ENCODE measurements at regions of chr3 and their contacts with region 1.

Region 1: DNA sequence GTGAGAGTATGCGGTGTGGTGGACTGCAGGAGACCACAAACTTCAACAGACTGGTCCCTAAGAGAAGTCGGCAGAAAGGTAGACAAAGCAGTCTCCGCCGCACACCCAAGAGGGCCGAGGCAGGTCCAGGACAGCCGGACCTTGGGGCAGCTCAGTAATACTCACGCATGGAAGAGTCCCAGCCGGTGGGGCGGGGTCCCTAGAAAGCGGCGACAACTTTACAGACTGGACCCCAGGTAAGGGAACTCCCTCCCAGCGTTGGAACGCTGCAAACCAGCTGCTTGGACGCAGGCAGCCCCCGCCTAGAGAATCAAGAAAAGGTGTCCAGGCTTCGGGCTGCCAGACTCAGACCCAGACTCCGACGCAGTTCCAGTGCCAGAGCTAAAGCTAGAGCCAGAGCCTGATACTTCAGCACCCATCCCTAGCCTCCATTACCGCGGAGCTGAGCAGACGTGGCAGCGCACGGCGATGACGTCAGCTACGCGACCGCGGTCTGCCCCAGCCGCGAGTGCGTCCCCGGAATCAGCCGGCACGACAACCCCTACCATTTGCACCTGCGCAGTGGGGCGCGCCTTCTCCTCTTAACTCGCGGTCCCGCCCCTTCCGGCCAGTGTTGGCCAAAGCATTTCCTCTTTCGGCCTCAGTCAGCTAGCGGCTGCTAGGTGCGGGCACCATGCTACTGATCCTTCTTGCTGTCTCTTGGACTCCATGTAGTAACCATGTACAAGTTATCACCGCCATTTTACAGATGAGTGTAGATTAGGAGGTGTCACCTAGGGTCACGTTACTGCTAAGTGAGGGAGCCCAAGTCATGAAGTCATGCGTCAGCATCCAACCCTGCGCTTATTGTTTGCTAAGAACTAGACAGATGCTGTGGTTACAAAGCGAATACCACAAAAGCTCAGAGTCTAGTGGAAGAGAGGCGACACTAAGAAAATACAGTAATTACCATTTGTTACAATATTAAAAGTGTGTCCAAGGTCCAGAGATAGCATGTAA is at the start of gene TMEM39A:
- DNase-seq: peak; percentile 98
- ATAC-seq: peak; percentile 97 to 98
- H3K4me3 ChIP-seq: peak within 1 kb of the TSS; percentile 88
- H3K27ac ChIP-seq: peak within 1 kb of the TSS; percentile 86 to 88
- H3K4me1 ChIP-seq: peaks cover 19% of the 10 kb centered on the region
- CTCF ChIP-seq: no peak
- EP300 ChIP-seq: no peak
- POLR2A ChIP-seq: peak; percentile 94
- RAD21 ChIP-seq: no peak
- polyA plus RNA-seq, gene TMEM39A: 21.9 and 38.9 TPM in 2 replicates

Region 2: DNA sequence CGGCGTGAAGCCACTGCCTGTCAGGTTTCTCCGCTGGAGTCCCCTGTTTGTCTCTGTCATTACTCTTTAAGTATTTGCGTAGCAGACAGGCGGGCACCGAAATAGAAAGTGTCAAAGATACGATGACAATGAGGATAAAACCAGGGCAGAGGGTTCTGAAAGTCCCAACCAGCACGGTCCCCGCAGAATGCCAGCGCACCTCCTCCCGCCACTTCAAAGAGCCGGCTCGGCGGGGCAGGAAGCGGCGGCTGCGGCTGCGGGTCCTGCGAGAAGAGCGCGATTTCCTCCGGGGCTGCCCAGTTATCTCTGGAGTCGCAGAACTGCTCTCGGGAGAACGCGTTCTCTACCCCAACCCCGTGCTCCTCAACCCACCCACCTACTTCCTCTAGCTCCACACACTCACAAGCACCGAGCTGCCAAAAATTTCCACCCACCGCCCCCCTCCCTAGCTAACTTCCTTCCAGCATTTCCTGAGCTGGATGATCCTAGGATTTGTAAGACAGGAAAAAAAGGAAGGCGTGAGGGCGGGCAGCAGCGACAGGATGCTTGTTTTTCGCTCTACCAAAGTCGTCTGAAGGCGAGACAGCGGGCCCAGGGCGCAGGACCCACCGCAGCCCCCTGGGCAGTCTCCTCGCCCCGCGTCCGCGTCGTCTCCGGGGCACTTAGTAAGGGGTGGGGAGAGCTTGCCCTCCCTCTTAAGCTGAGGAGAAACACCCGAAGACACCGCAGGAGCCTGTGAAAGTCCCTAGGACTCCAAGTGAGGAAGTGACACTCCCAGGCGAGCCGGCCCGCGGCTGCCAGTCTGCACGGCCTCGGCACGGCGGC is 169.4 kb before region 1 on chr3 and contains the start of gene ARHGAP31:
- CTCF ChIA-PET with region 1: no interaction called
- POLR2A ChIA-PET with region 1: interaction called, 14 read pairs
- DNase-seq: peak; percentile 45 to 49
- ATAC-seq: peak; percentile 85 to 86
- H3K4me3 ChIP-seq: peak within 1 kb of the TSS; percentile 76
- H3K27ac ChIP-seq: peak within 1 kb of the TSS; percentile 72 to 88
- H3K4me1 ChIP-seq: peaks cover 14% of the 10 kb centered on the region
- CTCF ChIP-seq: no peak
- EP300 ChIP-seq: no peak
- POLR2A ChIP-seq: 0 out of 2 replicates have a peak, but pooled peaks have one; percentile 8
- RAD21 ChIP-seq: no peak
- polyA plus RNA-seq, gene ARHGAP31: 1.3 and 1.4 TPM in 2 replicates

Region 3: DNA sequence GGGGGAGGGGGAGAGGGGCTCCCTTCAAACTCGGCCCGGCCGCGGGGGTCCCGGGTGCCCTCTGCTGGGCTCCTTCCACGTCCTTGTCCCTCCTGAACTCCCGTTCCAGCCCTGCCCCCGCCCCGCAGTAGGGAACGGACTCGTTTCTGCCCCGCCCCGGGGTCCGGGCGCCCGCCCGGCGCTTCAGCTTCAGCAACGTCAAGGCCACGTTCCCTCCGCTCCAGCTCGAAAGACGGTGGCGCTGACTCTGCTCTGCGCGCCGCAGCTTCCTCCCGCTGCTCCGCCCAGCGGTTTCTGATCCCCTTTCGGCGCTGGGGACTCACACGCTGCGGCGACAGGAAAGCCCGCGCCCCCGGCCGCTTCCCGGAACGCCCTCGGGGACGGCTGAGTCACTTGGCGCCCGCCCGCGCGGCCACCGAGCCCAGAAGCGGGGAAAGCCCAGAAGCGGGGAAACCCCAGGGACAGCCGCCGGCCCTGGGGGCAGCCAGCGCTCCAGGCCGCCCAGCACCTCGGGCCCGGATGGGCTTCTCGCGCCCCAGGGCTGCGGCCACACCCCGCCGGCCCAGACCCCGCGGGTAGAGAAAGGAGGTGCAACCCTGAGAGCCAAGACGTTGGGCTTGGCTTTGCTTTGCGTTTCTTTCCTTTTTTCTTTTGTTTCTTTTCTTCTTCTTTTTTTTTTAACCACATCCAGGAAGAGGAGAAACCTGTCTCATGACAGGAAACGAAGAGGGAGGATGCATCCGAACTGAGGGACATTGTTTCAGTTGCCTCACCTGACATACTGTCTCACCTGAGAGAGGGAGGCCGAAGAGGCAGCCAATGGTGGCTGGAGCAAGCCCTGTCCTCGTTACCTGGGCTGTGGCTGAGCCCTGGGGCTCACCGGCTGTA is 140.4 kb before region 1 on chr3:
- CTCF ChIA-PET with region 1: no interaction called
- POLR2A ChIA-PET with region 1: interaction called, 12 read pairs
- DNase-seq: peak; percentile 66 to 79
- ATAC-seq: peak; percentile 93
- H3K4me3 ChIP-seq: peak overlapping the region; percentile 68
- H3K27ac ChIP-seq: peak overlapping the region; percentile 93 to 97
- H3K4me1 ChIP-seq: peaks cover 9% of the 10 kb centered on the region; the same call in 2 of the 3 replicates
- CTCF ChIP-seq: peak; percentile 1
- EP300 ChIP-seq: no peak
- POLR2A ChIP-seq: peak; percentile 76
- RAD21 ChIP-seq: peak in 1 of 2 experiments; percentile 38; a peak in 2 of 5 replicates

Region 4: DNA sequence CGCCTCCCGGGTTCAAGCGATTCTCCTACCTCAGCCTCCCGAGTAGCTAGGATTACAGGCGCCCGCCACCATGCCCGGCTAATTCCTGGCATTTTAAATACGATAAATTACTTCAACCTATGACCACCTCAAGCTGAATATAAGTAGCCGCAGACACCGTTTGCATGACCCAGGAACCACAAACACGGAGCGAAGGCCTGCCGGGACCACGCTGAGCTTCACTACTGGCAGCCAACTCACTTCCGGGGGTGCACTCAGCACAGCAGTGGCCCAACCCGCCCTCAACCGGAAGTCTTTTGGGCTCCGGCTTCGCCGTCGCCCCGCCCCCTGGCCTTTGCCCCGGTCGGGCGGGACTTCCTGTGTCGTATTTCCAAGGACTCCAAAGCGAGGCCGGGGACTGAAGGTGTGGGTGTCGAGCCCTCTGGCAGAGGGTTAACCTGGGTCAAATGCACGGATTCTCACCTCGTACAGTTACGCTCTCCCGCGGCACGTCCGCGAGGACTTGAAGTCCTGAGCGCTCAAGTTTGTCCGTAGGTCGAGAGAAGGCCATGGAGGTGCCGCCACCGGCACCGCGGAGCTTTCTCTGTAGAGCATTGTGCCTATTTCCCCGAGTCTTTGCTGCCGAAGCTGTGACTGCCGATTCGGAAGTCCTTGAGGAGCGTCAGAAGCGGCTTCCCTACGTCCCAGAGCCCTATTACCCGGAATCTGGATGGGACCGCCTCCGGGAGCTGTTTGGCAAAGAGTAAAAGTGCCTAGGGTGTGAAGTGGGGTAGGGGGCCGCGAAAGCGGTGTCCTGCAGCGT is 34.9 kb after region 1 on chr3 and contains the start of gene TIMMDC1:
- CTCF ChIA-PET with region 1: interaction called, 10 read pairs
- POLR2A ChIA-PET with region 1: interaction called, 50 read pairs
- DNase-seq: peak; percentile 96 to 98
- ATAC-seq: peak; percentile 99
- H3K4me3 ChIP-seq: peak within 1 kb of the TSS; percentile 79
- H3K27ac ChIP-seq: peak within 1 kb of the TSS; percentile 88 to 93
- H3K4me1 ChIP-seq: peaks cover 25% of the 10 kb centered on the region
- CTCF ChIP-seq: no peak
- EP300 ChIP-seq: no peak
- POLR2A ChIP-seq: peak; percentile 82
- RAD21 ChIP-seq: no peak; a peak in 1 of 5 replicates
- polyA plus RNA-seq, gene TIMMDC1: 127 and 135 TPM in 2 replicates

Region 5: GRCh38 chr3:119681279-119681678 is 217.8 kb after region 1 on chr3:
- CTCF ChIA-PET with region 1: interaction called, 10 read pairs
- POLR2A ChIA-PET with region 1: interaction called, 3 read pairs
- DNase-seq: peak; percentile 27 to 44
- ATAC-seq: peak; percentile 47 to 54; a peak in 2 of 6 replicates
- H3K4me3 ChIP-seq: no peak overlapping the region
- H3K27ac ChIP-seq: no peak overlapping the region
- H3K4me1 ChIP-seq: peaks cover 5% of the 10 kb centered on the region; the same call in 2 of the 3 replicates
- CTCF ChIP-seq: peak; percentile 70
- EP300 ChIP-seq: no peak
- POLR2A ChIP-seq: no peak
- RAD21 ChIP-seq: peak; percentile 84 to 87